Activated naive CD4-positive, alpha-beta T cell treated with anti-CD3 and anti-CD28 coated beads for 36 hours (primary cell): ENCODE measurements at regions of chr18 and their contacts with region 1.

Region 1: GRCh38 chr18:3062798-3063680 is 50.1 kb upstream of the LPIN2 start:
- DNase-seq: peak; percentile 89
- H3K4me3 Mint-ChIP-seq: peak overlapping the region; percentile 4
- H3K27ac Mint-ChIP-seq: no peak overlapping the region
- H3K4me1 Mint-ChIP-seq: peaks cover 64% of the 10 kb centered on the region
- H3K27me3 Mint-ChIP-seq: no peaks in the 10 kb centered on the region

Region 2: GRCh38 chr18:2655178-2655953 is 407.7 kb before region 1 on chr18 and contains the start of gene SMCHD1:
- CTCF ChIA-PET with region 1: no interaction called
- intact Hi-C with region 1: loop called (anchors 2 kb)
- DNase-seq: peak; percentile 93
- H3K4me3 Mint-ChIP-seq: peak within 1 kb of the TSS; percentile 93
- H3K27ac Mint-ChIP-seq: peak within 1 kb of the TSS; percentile 96
- H3K4me1 Mint-ChIP-seq: peaks cover 34% of the 10 kb centered on the region
- H3K27me3 Mint-ChIP-seq: no peaks in the 10 kb centered on the region
- total RNA-seq, gene SMCHD1: 91.3 to 91.5 TPM

Region 3: GRCh38 chr18:2978646-2979045 is 84.4 kb before region 1 on chr18:
- CTCF ChIA-PET with region 1: interaction called, 23 read pairs
- intact Hi-C with region 1: loop called (anchors 1 kb)
- DNase-seq: peak; percentile 66
- H3K4me3 Mint-ChIP-seq: peak overlapping the region; percentile 54
- H3K27ac Mint-ChIP-seq: peak overlapping the region; percentile 92
- H3K4me1 Mint-ChIP-seq: peaks cover 91% of the 10 kb centered on the region
- H3K27me3 Mint-ChIP-seq: no peaks in the 10 kb centered on the region

Region 4: DNA sequence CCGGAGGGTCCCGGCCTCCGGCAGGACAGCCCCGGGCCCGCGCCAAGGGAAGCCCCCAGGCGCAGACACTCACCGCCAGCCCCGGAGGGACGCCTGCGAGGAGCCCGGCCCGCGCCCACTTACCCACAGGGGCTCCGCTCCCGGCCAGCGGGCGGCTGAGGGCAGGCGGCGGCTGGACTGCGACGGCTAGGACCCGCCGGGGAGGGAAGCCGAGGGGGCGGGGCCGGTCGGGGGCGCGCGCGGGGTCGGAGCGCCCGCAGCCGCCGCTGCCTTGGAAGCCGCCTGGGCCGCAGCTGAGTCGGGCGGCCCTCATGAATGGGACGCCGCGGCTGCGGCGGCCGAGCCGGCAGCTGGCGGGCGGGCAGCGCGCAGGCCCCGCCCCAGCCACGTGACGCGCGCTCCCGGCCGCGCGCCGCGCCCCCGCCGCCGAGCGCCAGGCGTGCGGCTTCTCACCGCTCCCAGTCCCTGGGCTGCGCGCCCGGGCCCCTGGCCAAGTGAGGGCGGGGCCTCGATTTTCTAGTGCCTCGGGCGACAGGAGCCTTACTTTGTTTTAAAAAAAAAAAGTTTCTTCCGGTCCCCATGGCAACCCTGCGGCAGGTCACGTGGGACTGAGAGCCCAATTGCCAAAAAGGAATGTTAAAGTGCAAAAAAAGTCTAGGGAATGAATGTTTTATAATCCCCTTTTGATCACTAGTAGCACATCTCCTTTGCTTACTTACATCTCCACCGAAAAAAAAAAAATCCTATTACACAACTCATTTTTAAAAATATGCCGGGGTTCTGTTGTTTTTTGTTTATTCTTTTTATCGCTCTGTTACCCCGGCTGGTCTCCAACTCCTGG is 49.9 kb before region 1 on chr18 and contains the start of gene LPIN2:
- CTCF ChIA-PET with region 1: interaction called, 33 read pairs
- intact Hi-C with region 1: loop called (anchors 1 kb)
- DNase-seq: peak; percentile 97
- H3K4me3 Mint-ChIP-seq: peak within 1 kb of the TSS; percentile 84
- H3K27ac Mint-ChIP-seq: peak within 1 kb of the TSS; percentile 92
- H3K4me1 Mint-ChIP-seq: peaks cover 68% of the 10 kb centered on the region
- H3K27me3 Mint-ChIP-seq: no peaks in the 10 kb centered on the region
- total RNA-seq, gene LPIN2: 62.4 to 65.7 TPM

Region 5: DNA sequence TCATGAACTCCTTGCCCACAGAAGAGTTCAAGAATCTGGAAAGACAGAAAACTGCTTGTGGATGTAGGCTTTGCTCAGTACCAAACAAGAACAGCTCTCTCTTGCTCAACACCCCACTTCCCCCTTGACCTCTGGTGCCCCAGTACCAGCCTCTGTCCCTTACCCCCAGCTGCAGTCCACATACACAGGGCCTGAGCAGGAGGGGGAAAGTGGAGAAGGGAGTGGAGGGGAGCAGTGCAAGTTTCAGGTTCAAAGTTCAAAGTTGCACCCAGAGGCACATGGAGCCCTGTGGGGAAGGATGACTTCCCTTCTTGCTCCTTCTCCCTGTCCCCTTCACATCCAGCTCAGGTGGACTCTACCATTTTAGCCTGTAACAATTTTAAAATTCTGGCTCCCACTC is 11.0 kb after region 1 on chr18:
- CTCF ChIA-PET with region 1: interaction called, 55 read pairs
- intact Hi-C with region 1: no loop called
- DNase-seq: no peak
- H3K4me3 Mint-ChIP-seq: no peak overlapping the region
- H3K27ac Mint-ChIP-seq: no peak overlapping the region
- H3K4me1 Mint-ChIP-seq: peaks cover 27% of the 10 kb centered on the region
- H3K27me3 Mint-ChIP-seq: no peaks in the 10 kb centered on the region

Region 6: DNA sequence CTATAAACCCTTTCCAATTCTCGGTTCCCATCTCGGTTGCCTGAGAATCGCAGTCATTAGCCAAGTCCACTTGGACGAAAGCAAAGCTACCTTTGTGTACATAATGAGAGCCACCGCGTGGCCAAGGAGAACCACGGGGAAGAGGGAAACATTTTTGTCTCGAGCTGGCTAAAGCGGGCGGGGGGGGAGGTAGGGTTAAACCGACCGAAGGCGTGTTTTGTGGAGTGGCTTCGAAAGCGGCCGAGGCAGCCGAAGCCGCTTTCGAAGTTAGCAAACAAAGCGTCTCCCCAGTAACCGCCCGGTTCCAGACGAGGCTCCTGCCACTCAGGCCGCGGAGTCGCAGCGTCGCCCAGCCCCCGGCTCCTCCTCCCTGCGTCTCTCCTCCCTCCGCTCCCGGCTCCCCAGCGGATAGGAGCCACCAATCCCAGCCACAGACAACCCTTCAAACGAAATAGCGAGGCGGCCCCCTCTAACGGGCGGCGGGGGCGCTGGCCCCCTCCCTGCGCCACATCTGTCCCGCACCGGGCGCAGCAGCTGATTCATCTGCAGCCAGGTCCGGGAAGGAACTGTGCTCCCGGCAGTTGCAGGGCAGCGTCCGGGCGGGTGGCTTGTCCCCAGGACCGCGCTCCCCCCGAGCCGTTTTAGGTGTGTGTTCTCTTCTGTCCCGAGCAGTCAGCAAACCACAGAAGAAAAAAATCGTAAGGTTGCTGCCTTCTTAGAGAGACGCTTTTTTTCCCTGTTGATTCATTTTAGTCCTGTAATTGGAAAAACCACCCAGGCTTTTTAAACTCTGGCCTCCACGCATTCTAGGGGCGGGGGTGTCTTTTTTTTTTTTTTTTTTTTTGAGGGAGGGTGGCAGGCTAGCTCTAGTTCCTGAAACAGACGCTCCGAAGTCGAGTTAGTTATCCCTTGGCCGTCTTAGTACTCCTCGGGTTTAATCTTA is 385.1 kb after region 1 on chr18:
- CTCF ChIA-PET with region 1: no interaction called
- intact Hi-C with region 1: loop called (anchors 1 kb)
- DNase-seq: peak; percentile 90
- H3K4me3 Mint-ChIP-seq: peak overlapping the region; percentile 89
- H3K27ac Mint-ChIP-seq: peak overlapping the region; percentile 98
- H3K4me1 Mint-ChIP-seq: peaks cover 30% of the 10 kb centered on the region
- H3K27me3 Mint-ChIP-seq: no peaks in the 10 kb centered on the region